SK-N-SH (cell line): ENCODE measurements at regions of chr2 and their contacts with region 1.

Region 1: DNA sequence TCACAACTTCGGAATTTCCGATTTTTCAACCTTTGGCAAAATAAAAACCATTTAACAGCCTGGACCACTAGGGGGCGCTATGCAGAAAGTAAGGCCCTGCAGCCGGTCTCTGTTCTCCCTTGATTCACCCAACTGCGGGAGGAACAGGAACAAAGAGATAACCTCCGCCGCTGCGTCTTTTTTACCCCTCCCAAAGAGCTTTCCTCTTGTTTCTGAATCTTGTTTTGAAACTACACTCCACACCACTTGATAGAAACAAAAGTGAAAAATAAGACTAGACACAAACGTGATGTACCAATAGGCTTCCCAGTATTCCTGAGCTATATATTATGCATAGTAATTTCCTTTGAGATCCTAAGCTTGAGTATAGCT is 231.2 kb downstream of the MYO3B start:
- DNase-seq: peak; percentile 66
- H3K4me3 ChIP-seq: no peak overlapping the region; a peak in 1 of 4 replicates
- H3K27ac ChIP-seq: no peak overlapping the region
- H3K4me1 ChIP-seq: no peaks in the 10 kb centered on the region
- H3K27me3 ChIP-seq: no peaks in the 10 kb centered on the region; the same call in 1 of the 2 replicates
- CTCF ChIP-seq: peak; percentile 95
- EP300 ChIP-seq: no peak
- RAD21 ChIP-seq: peak; percentile 70

Region 2: GRCh38 chr2:169363560-169364150 is 1045.5 kb before region 1 on chr2:
- CTCF ChIA-PET with region 1: no interaction called
- POLR2A ChIA-PET with region 1: no interaction called
- DNase-seq: peak; percentile 62
- H3K4me3 ChIP-seq: peak overlapping the region; percentile 45 to 57
- H3K27ac ChIP-seq: no peak overlapping the region
- H3K4me1 ChIP-seq: peaks cover 17 to 31% of the 10 kb centered on the region in 2 experiments; a peak in 2 of 4 replicates
- H3K27me3 ChIP-seq: peaks cover 43% of the 10 kb centered on the region
- CTCF ChIP-seq: no peak
- EP300 ChIP-seq: no peak
- RAD21 ChIP-seq: no peak

Region 3: DNA sequence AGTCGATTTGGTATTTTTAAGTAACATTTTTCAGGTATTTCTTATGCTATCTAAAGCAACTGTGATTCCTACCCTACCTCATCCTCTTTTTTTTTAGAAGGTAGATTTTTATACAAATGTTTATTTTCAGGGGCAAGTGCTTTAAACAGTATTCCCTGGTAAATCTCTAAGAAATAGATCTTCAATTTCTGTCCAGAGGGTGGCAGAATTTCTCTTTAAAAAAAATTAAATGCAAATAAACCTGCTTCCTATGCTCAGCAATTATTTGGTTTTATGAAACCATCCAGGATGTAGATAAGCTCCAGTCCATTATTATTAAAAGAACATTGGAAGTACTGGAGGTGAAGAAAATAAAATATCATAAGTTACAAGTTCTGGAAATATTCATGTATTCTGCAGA is 39.3 kb before region 1 on chr2:
- CTCF ChIA-PET with region 1: interaction called, 11 read pairs
- POLR2A ChIA-PET with region 1: no interaction called
- DNase-seq: peak; percentile 11
- H3K4me3 ChIP-seq: no peak overlapping the region
- H3K27ac ChIP-seq: no peak overlapping the region
- H3K4me1 ChIP-seq: no peaks in the 10 kb centered on the region
- H3K27me3 ChIP-seq: peaks cover 15% of the 10 kb centered on the region; the same call in 1 of the 2 replicates
- CTCF ChIP-seq: peak; percentile 58
- EP300 ChIP-seq: no peak
- RAD21 ChIP-seq: peak; percentile 52; the same call in 1 of the 2 replicates

Region 4: DNA sequence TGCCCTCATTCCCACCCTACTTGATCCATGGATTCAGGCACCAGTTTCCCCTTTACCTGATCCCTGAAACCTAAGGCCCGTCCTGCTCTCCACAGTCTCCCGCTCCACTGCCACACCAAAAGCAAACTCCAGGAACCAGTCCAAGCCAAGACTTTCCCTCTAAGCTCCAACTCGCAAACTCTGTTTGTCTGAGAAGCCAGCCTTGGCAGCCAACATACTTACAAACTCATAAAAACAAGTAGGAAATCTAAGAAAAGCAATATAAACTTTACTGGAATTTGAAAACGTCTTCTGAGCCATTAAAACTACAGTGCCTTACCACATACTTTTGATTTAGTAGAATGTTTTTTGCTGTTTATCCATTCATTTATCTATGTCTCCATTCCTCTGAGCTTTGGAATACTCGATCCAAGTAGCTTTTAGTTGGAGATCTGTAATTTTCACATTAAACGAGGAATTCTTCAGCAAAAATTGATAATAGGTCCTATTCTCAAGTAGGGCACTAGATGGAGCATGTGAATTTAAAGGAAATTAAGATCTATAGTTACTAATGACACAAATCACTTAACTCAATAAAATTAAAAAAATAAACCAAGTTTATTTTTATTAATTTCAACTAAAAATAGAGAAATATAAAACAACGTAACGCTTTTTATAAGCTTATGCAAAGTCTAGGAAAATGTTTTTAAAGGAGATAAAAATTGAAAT is 31.5 kb before region 1 on chr2:
- CTCF ChIA-PET with region 1: interaction called, 11 read pairs
- POLR2A ChIA-PET with region 1: no interaction called
- DNase-seq: no peak
- H3K4me3 ChIP-seq: no peak overlapping the region
- H3K27ac ChIP-seq: no peak overlapping the region
- H3K4me1 ChIP-seq: no peaks in the 10 kb centered on the region
- H3K27me3 ChIP-seq: no peaks in the 10 kb centered on the region
- CTCF ChIP-seq: peak; percentile 29
- EP300 ChIP-seq: no peak
- RAD21 ChIP-seq: no peak

Region 5: DNA sequence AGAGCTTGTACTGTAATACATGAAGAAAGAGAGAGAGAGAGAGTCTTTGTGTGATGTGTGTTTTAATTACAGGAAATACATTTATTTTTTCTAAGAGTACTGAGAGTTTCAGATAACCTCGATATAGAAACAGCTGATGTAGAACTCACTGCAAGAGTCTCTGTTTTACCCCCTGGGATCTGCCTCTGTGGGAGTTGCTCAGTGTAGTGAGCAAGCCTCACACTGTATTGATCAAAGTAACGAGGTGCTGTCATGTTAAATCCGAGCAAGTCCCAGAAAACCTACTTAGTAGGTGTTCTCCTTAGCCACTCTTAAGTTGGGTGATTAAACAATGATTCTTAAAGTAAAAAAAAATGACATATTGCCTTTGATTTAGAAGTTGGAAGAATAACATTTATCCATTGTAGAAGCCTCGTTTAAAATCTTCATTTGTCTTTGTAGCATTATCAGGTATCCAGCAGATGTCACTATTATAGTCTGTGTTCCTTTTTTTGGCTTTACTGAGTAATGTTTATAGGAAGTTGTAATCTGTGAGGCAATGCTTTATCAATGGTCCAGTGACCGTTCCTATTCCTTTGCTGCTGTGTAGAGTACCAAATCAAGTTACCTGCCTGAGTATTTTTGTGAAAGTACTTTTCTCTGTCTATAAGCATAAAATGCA is 12.2 kb before region 1 on chr2:
- CTCF ChIA-PET with region 1: interaction called, 29 read pairs
- POLR2A ChIA-PET with region 1: no interaction called
- DNase-seq: peak; percentile 15
- H3K4me3 ChIP-seq: no peak overlapping the region
- H3K27ac ChIP-seq: no peak overlapping the region
- H3K4me1 ChIP-seq: peaks cover 0 to 4% of the 10 kb centered on the region in 2 experiments; a peak in 1 of 4 replicates
- H3K27me3 ChIP-seq: no peaks in the 10 kb centered on the region
- CTCF ChIP-seq: peak; percentile 54
- EP300 ChIP-seq: no peak
- RAD21 ChIP-seq: peak; percentile 48

Region 6: GRCh38 chr2:170425281-170425751 is 16.2 kb after region 1 on chr2:
- CTCF ChIA-PET with region 1: interaction called, 39 read pairs
- POLR2A ChIA-PET with region 1: no interaction called
- DNase-seq: no peak
- H3K4me3 ChIP-seq: no peak overlapping the region
- H3K27ac ChIP-seq: no peak overlapping the region
- H3K4me1 ChIP-seq: no peaks in the 10 kb centered on the region
- H3K27me3 ChIP-seq: no peaks in the 10 kb centered on the region
- CTCF ChIP-seq: no peak
- EP300 ChIP-seq: no peak
- RAD21 ChIP-seq: no peak

Region 7: GRCh38 chr2:170432823-170433222 is 23.7 kb after region 1 on chr2:
- CTCF ChIA-PET with region 1: interaction called, 17 read pairs
- POLR2A ChIA-PET with region 1: no interaction called
- DNase-seq: no peak
- H3K4me3 ChIP-seq: no peak overlapping the region
- H3K27ac ChIP-seq: no peak overlapping the region
- H3K4me1 ChIP-seq: no peaks in the 10 kb centered on the region
- H3K27me3 ChIP-seq: no peaks in the 10 kb centered on the region
- CTCF ChIP-seq: no peak
- EP300 ChIP-seq: no peak
- RAD21 ChIP-seq: no peak